GM13976 (cell line): ENCODE measurements at regions of chr15 and their contacts with region 1.

Region 1: DNA sequence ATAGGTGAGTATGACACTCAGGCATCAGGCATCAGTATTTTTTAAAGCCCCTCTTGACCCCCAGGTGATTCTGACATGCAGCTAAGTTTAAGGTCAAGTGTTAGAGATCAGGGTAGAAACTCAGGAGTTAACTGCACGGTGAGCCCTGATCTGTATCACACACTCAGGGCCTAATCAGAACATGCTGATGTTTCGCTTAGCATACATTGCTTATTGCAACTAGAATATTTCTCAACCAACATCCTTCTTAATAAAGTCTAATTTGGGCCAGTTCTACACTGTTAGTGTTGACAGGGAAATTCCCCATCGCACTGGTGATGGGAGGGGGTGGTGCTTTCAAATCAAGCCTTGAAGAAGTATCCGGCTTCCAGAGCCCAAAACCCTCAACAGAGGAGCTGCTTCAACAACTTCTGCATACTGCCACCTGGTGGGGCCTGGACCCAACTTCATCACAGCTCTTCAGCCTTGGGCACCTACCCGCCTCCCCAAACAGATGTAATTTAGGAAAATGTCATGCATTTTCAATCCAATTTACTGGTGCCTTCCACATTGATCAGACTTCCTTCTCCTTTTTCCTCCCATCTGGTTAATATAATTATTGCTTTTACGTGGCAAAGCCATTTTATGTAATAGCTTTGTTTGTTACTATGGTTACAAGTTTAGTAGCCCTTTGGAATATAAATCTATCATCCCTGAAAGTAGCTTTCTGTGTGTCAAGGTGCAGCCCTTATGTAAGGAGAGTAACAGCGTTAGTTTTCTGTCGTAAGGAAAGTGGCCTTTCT is 312.2 kb downstream of the RORA start:
- DNase-seq: peak; percentile 65
- CTCF ChIP-seq: peak; percentile 71

Region 2: DNA sequence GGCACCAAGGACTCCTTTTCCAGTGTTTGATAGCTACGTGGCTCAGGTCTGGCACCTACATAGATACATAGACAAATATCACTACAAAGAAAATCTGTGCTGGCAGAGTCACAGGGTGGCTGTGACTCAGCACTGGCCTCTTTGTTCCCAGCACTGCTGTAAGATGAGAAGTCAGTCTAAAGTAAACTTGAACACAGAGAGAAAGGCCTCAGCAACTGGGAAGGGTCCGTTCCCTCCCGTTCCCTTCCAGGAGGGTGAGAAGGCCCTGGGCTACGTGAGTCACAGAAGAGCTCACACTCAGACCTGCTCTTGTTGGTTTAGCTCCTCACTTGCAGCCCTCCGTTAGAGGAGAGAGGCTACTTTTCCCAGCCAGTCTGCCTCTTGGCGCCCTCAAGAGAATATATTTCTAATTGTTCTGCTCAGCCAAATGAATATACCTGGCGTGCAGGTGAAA is 542.2 kb before region 1 on chr15:
- in situ Hi-C with region 1: loop called (anchors 25 kb)
- DNase-seq: no peak
- CTCF ChIP-seq: no peak

Region 3: DNA sequence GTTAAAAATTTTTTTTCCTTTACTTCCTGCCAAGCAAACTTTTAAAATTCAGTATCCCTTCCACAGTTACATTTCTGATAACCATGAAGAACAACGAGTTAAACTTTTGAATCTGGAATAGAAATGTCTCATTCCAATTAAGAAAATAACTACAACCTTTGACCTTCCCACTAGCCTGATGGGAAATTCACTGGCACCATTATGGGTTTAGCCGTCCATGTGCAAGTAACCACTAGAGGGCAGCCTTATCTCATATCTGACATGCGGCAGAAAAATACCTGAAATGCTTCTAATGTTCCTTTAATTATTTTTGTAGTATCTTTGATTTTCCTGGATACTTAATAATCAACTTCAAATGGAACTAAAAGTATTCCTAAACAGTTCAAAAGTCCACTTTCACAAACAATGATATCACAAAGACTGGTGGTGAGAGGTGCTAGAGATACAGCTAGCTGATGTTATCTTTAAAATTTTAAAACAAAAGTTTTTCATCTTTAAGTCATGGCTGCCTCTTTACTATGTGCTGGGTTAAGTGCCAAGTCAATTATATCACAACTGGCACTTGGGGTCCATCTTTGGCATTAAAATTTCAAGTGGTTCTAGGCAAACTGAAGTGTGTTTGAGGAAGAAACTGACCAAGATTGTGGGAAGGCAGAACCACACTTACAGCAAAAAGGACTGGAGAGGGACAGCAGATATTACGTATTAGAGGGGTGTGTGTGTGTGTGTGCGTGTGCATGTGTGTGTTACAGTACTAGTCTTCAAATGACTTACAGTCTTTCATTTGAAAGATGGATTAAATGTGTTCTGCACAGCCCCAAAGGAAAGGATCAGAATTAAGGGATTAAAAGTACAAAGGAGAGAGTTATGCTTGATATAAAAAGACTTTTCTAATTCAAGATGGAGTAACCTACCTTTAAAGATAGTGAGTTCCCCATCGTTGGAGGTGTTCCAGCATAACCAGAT is 330.8 kb before region 1 on chr15:
- in situ Hi-C with region 1: loop called (anchors 10 kb)
- DNase-seq: peak; percentile 48
- CTCF ChIP-seq: peak; percentile 83

Region 4: DNA sequence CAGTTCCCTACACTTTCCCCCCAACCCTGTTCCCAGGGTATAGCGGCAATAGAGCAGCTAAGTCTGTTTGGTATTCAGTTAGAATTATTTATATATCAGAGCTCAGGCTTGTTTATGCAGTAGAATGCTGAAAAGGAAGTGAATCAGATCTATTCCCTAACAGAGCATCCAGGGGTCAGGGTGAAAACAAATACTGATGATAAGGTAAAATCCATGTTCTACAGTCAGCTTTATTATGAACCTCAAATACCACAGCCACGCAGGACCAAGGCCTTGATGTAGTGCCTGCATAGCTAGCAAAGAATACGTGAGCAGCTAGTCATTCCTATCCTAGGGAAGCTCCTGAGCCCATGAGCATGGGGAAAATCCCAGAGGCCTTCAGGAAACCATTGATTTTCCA is 208.2 kb before region 1 on chr15:
- in situ Hi-C with region 1: no loop called
- DNase-seq: no peak
- CTCF ChIP-seq: no peak